CD4-positive, alpha-beta T cell (primary cell): ENCODE measurements at regions of chr3 and their contacts with region 1.

Region 1: DNA sequence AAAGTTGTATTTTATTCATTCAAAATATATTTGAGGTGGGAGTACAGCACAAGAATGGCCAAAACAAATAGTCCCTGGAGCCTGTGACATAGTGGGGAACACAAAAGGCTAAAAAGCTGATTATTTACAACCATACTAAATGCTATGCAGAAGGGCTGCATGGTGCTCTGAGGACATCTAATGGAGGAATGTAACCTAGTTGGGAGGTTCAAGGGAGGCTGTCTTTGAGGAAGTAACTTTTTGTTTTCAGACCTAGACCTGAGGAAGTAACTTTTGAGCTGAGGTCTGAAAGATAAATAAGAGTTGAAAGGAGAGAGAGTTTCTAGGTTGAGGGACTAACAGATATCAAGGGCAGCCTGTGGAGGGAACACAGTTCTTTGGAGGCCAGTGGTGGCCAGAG is 34.8 kb upstream of the RASA2 start:
- DNase-seq: peak in 10 of 14 experiments; percentile 15 to 81 (median 45)
- ATAC-seq: peak; percentile 96
- H3K4me3 ChIP-seq: no peak overlapping the region
- H3K4me3 Mint-ChIP-seq: no peak overlapping the region
- H3K27ac ChIP-seq: peak overlapping the region in 1 of 2 donors; percentile 11
- H3K27ac Mint-ChIP-seq: no peak overlapping the region
- H3K4me1 ChIP-seq: peaks cover 14% of the 10 kb centered on the region
- H3K4me1 Mint-ChIP-seq: peaks cover 14% of the 10 kb centered on the region
- H3K27me3 ChIP-seq: no peaks in the 10 kb centered on the region
- H3K27me3 Mint-ChIP-seq: no peaks in the 10 kb centered on the region
- CTCF ChIP-seq: peak; percentile 88

Region 2: DNA sequence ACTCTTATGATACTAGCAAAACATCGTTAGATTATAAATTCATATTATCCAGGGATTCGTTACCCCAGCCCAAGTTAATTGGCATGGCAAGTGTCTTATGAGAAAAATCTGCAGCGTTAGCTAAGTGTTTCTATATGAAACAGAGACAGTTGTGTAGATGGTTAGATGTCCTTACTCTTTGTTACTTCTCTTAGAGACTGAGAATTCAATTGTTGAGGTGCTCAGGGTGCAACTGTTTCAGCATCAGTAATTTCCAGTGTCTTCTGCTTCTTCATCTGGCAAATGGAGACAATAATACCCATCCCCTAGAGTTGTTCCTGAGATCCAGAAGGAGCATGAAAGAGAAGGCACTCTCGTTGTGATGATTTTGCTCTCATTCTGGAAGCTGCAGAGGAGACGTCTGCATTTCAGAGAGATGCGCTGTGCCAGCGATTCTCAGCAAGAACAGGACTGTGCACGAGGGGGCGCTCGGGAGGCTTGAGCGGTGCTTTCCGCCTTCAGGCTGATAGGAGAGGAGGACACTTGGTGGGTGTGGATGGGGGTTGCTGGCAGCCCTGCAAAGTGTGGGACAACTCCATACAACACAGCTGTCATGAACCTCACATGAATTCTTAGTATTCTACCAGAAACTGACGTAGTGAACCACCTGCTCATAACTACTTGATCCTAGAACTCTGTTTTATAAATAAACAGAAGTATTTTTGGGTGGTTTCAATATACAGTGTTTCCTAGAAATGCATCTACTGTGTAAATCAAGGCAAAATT is 440.6 kb before region 1 on chr3:
- CTCF ChIA-PET with region 1: interaction called, 3 read pairs
- POLR2A ChIA-PET with region 1: no interaction called
- intact Hi-C with region 1: loop called in 1 of 2 experiments (anchors 5 kb)
- DNase-seq: peak; percentile 54 to 80 (median 66)
- ATAC-seq: peak; percentile 96
- H3K4me3 ChIP-seq: no peak overlapping the region
- H3K4me3 Mint-ChIP-seq: no peak overlapping the region
- H3K27ac ChIP-seq: no peak overlapping the region
- H3K27ac Mint-ChIP-seq: no peak overlapping the region
- H3K4me1 ChIP-seq: no peaks in the 10 kb centered on the region
- H3K4me1 Mint-ChIP-seq: peaks cover 6% of the 10 kb centered on the region
- H3K27me3 ChIP-seq: peaks cover 0 to 3% of the 10 kb centered on the region in 2 experiments
- H3K27me3 Mint-ChIP-seq: peaks cover 54% of the 10 kb centered on the region
- CTCF ChIP-seq: peak; percentile 63

Region 3: GRCh38 chr3:141266797-141267555 is 185.1 kb before region 1 on chr3:
- CTCF ChIA-PET with region 1: interaction called, 3 read pairs
- POLR2A ChIA-PET with region 1: interaction called, 11 read pairs
- intact Hi-C with region 1: no loop called
- DNase-seq: peak in 13 of 14 experiments; percentile 7 to 71 (median 51)
- ATAC-seq: peak; percentile 81
- H3K4me3 ChIP-seq: peak overlapping the region; percentile 64
- H3K4me3 Mint-ChIP-seq: peak overlapping the region; percentile 90
- H3K27ac ChIP-seq: peak overlapping the region; percentile 72 to 84
- H3K27ac Mint-ChIP-seq: peak overlapping the region; percentile 96
- H3K4me1 ChIP-seq: peaks cover 35% of the 10 kb centered on the region
- H3K4me1 Mint-ChIP-seq: peaks cover 49% of the 10 kb centered on the region
- H3K27me3 ChIP-seq: no peaks in the 10 kb centered on the region
- H3K27me3 Mint-ChIP-seq: no peaks in the 10 kb centered on the region
- CTCF ChIP-seq: no peak

Region 4: DNA sequence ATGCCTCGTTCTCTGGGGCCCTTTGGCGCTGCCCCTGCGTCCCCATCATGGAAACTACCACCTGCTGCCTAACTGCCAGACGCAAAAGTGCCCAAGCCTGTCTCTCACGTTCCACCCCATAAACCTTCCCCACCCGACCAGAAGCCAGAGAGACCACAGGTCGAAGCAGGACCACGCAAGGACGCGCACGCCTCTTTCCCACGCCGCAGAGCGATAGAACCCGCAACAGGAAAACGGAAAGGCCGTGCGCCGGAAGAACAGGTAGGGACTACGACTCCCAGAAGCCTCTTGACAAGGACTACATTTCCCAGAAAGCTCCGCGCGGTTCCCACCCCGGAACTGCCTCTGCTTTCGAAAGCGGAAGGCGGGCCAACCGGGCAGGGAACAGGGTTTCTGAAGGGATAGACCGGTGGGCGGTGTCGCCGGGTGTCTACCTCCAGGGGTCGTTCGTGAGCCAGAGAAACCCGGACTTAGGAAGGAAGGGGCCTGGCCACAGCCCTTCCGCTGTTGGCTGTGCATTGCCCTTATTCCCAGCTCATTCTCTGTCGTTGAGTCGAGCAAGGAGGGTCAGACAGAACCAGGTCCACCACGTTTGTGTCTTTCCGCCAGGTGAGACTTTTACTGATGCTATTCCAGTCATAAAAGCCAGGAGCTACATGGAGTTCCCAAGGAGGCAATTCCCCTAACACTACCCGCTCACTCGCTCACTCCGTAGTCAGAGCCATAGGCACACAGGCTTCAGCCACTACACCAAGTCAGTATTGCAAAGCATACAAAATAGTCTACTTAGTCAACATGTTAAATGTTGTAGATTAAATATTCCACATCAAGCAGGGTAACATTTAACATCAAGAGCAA is 140.3 kb before region 1 on chr3:
- CTCF ChIA-PET with region 1: interaction called, 60 read pairs
- POLR2A ChIA-PET with region 1: interaction called, 20 read pairs
- intact Hi-C with region 1: loop called in 1 of 2 experiments (anchors 1 kb)
- DNase-seq: peak; percentile 93 to 99 (median 97)
- ATAC-seq: peak; percentile 88
- H3K4me3 ChIP-seq: peak overlapping the region; percentile 86
- H3K4me3 Mint-ChIP-seq: peak overlapping the region; percentile 97
- H3K27ac ChIP-seq: peak overlapping the region; percentile 62 to 75
- H3K27ac Mint-ChIP-seq: peak overlapping the region; percentile 92
- H3K4me1 ChIP-seq: peaks cover 48% of the 10 kb centered on the region
- H3K4me1 Mint-ChIP-seq: peaks cover 67% of the 10 kb centered on the region
- H3K27me3 ChIP-seq: no peaks in the 10 kb centered on the region
- H3K27me3 Mint-ChIP-seq: no peaks in the 10 kb centered on the region
- CTCF ChIP-seq: peak; percentile 65

Region 5: GRCh38 chr3:141370065-141370533 is 81.9 kb before region 1 on chr3:
- CTCF ChIA-PET with region 1: interaction called, 19 read pairs
- POLR2A ChIA-PET with region 1: interaction called, 10 read pairs
- intact Hi-C with region 1: loop called (anchors 1 to 2 kb)
- DNase-seq: peak; percentile 20 to 94 (median 42)
- ATAC-seq: peak; percentile 100
- H3K4me3 ChIP-seq: no peak overlapping the region
- H3K4me3 Mint-ChIP-seq: no peak overlapping the region
- H3K27ac ChIP-seq: no peak overlapping the region
- H3K27ac Mint-ChIP-seq: peak overlapping the region; percentile 3
- H3K4me1 ChIP-seq: no peaks in the 10 kb centered on the region
- H3K4me1 Mint-ChIP-seq: peaks cover 8% of the 10 kb centered on the region
- H3K27me3 ChIP-seq: no peaks in the 10 kb centered on the region
- H3K27me3 Mint-ChIP-seq: no peaks in the 10 kb centered on the region
- CTCF ChIP-seq: peak; percentile 53

Region 6: GRCh38 chr3:142279965-142280590 is 828.0 kb after region 1 on chr3:
- CTCF ChIA-PET with region 1: no interaction called
- POLR2A ChIA-PET with region 1: no interaction called
- intact Hi-C with region 1: loop called in 1 of 2 experiments (anchors 10 kb)
- DNase-seq: peak in 12 of 14 experiments; percentile 1 to 80 (median 18)
- ATAC-seq: peak; percentile 80
- H3K4me3 ChIP-seq: no peak overlapping the region
- H3K4me3 Mint-ChIP-seq: no peak overlapping the region
- H3K27ac ChIP-seq: no peak overlapping the region
- H3K27ac Mint-ChIP-seq: no peak overlapping the region
- H3K4me1 ChIP-seq: peaks cover 12% of the 10 kb centered on the region
- H3K4me1 Mint-ChIP-seq: no peaks in the 10 kb centered on the region
- H3K27me3 ChIP-seq: no peaks in the 10 kb centered on the region
- H3K27me3 Mint-ChIP-seq: no peaks in the 10 kb centered on the region
- CTCF ChIP-seq: peak; percentile 77